Esophagus squamous epithelium (tissue), 5 donors: ENCODE measurements at regions of chr4 and their contacts with region 1.

Region 1: GRCh38 chr4:68498413-68499007 is 51.2 kb downstream of the TMPRSS11E start:
- DNase-seq: no peak
- H3K4me3 ChIP-seq: no peak overlapping the region
- H3K27ac ChIP-seq: no peak overlapping the region
- H3K4me1 ChIP-seq: peaks cover 0 to 3% (median 0%) of the 10 kb centered on the region in 3 donors
- H3K27me3 ChIP-seq: no peaks in the 10 kb centered on the region
- CTCF ChIP-seq: peak; percentile 20 to 87 (median 68)
- POLR2A ChIP-seq: no peak

Region 2: GRCh38 chr4:68404153-68404552 is 94.4 kb before region 1 on chr4:
- intact Hi-C with region 1: no loop called
- DNase-seq: no peak
- H3K4me3 ChIP-seq: no peak overlapping the region
- H3K27ac ChIP-seq: no peak overlapping the region
- H3K4me1 ChIP-seq: no peaks in the 10 kb centered on the region
- H3K27me3 ChIP-seq: no peaks in the 10 kb centered on the region
- CTCF ChIP-seq: no peak
- POLR2A ChIP-seq: no peak

Region 3: DNA sequence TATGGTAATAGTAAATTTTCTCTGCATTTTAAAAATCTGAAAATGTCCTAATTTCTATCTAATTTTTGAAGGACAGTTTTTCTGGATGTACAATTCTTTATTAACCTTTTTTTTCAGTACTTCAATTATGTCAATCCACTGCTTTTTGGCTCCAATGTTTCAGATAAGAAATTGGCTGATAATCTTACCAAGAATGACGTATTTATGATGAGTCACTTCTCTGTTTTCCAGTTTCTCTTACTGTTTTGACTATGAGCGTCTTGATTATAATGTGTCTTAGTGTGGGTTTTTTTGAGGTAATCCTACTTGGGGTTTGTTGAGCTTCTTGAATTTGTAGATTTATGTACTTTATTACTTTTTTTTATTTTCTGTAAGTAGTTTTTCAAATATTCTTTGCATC is 668.8 kb after region 1 on chr4:
- intact Hi-C with region 1: loop called (anchors 5 kb)
- DNase-seq: no peak
- H3K4me3 ChIP-seq: no peak overlapping the region
- H3K27ac ChIP-seq: no peak overlapping the region
- H3K4me1 ChIP-seq: no peaks in the 10 kb centered on the region
- H3K27me3 ChIP-seq: no peaks in the 10 kb centered on the region
- CTCF ChIP-seq: no peak
- POLR2A ChIP-seq: no peak